ENCODE measurements at regions of chr17 and their contacts with region 1.

Region 1: GRCh38 chr17:1752425-1753262 is 9.2 kb upstream of the SERPINF1 start:
- DNase-seq: no peak

Region 2: DNA sequence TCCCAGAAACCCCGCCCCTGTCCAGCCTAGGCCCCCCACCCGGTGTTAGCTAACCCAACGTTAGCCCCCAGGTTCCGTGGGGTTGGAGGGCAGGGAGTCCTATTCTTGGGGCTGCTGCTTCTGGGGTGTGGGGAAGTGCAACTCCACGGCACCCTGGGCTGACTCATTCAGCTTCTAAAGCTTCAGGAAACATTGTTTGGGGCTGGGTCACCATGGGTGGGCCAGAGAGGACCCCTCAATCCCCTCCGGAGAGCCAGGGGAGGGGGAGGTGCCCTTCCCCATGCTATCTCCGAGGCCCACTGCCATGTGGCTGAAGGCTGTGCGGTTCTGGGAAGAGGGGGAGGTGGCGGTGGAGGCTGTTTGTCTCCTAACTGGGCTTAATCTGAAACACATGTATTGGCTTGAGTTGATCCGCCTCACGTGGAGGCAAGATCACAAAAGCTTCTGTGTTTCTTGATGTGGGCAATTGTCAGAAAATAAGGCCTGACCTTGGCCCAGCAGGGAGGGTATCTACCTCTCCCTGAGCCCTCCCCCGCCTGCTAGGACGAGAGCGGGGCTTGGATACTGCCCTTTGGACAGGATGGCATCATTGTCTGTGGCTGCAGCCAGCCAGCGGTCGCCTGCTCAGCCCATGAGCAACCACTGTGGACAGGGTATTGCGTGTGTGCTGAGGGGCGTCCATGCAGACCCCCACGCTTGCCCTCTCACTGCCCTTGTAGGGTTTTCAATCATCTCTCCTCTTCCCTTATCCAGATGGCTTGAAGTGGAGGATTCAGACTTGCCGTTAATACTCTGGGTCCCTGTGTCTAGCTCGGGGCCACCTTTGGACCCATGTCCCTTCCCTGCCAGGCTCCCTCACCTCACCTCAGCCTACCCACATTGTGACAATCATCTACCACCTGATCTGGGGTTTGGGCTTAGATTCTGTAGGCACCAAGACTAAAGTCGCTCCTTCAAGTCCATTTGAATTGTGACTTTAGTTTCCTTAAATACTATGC is 10.6 kb after region 1 on chr17:
- CTCF ChIA-PET with region 1: interaction called, 3 read pairs
- POLR2A ChIA-PET with region 1: interaction called, 14 read pairs
- DNase-seq: no peak

Measured in HEK293T (cell line).